ENCODE measurements at regions of chr11 and their contacts with region 1.

Region 1: DNA sequence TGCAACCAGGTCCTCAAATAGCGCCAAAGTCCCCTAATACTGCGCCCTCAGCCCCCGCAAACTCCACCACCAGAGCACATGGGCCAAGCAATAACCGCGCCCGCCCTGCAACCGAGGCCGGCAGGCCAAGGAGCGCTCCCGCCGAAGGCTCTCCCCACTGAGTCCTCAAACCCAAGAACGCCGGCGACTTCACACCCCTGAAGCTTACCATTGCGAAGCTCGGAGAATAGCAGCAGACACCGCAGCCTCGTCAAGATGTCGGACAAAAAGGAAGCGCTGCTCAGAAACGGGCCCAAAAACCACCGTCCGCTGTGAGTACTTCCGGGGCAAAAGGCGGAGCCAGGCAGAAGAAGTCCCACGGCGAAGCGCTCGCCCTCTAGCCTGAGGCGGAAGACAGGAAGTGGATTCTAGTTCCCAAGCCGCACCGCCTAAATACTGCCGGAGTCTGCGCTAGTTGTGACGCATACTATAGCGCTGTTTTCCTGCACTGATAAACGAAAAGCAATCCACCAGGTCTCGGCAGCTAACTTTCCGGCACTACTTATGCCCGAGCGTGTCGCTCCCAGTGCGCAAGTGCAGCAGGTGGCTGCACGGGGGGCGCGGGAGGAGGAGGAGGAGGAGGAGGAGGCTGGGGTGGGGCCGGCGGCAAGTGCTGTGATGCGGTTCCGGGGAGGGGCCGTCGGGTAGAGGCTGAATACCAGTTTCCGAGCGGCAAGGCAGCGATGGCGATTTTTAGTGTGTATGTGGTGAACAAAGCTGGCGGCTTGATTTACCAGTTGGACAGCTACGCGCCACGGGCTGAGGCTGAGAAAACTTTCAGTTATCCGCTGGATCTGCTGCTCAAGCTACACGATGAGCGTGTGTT is at the starts of genes RPS25 and TRAPPC4:
- DNase-seq: peak; percentile 98
- ATAC-seq: peak; percentile 91
- H3K4me3 Mint-ChIP-seq: peak within 1 kb of the TSS; percentile 94
- H3K27ac Mint-ChIP-seq: peak within 1 kb of the TSS; percentile 99
- H3K4me1 Mint-ChIP-seq: peaks cover 56% of the 10 kb centered on the region
- H3K27me3 Mint-ChIP-seq: no peaks in the 10 kb centered on the region
- total RNA-seq, gene RPS25: 945 to 1,070 TPM
- total RNA-seq, gene TRAPPC4: 73.9 to 91.5 TPM

Region 2: GRCh38 chr11:118980191-118980881 is 38.0 kb before region 1 on chr11:
- CTCF ChIA-PET with region 1: no interaction called
- DNase-seq: no peak
- ATAC-seq: no peak
- H3K4me3 Mint-ChIP-seq: no peak overlapping the region
- H3K27ac Mint-ChIP-seq: no peak overlapping the region
- H3K4me1 Mint-ChIP-seq: no peaks in the 10 kb centered on the region
- H3K27me3 Mint-ChIP-seq: peaks cover 12% of the 10 kb centered on the region

Region 3: GRCh38 chr11:118997627-118998387 is 20.5 kb before region 1 on chr11 and contains the start of gene CENATAC:
- CTCF ChIA-PET with region 1: interaction called, 33 read pairs
- DNase-seq: peak; percentile 98
- ATAC-seq: peak; percentile 97
- H3K4me3 Mint-ChIP-seq: peak within 1 kb of the TSS; percentile 97
- H3K27ac Mint-ChIP-seq: peak within 1 kb of the TSS; percentile 97
- H3K4me1 Mint-ChIP-seq: peaks cover 33% of the 10 kb centered on the region
- H3K27me3 Mint-ChIP-seq: no peaks in the 10 kb centered on the region
- total RNA-seq, gene CENATAC: 43.4 to 47.1 TPM

Region 4: DNA sequence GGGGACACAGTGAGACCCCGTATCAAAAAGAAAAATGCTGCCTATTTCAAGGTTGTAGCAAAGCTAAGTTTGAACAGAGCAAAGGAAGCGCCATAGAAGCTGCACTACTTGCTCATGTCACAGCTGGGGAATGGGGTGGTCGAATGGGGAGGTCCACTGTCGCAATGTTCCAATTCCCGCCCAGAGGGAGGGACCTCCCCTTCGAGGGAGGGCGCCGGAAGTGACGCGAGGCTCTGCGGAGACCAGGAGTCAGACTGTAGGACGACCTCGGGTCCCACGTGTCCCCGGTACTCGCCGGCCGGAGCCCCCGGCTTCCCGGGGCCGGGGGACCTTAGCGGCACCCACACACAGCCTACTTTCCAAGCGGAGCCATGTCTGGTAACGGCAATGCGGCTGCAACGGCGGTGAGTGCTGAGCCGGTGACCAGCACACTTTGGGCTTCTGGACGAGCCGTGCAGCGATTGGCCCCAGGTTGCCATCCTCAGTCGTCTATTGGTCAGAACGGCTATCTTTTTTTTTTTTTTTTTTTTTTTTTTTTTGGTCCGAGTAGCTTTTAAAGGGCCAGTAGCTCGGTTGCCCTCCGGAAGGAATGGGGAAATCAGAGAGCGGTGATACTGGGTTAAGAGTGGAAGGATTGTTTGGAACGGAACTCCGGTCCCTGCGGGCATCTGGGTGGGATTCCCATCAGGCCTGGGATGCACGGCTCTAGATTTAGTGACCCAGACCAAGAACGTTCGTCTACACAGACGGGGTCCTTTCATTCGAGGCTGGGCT is 66.5 kb after region 1 on chr11 and contains the start of gene HMBS:
- CTCF ChIA-PET with region 1: no interaction called
- DNase-seq: peak; percentile 94
- ATAC-seq: peak; percentile 90
- H3K4me3 Mint-ChIP-seq: peak within 1 kb of the TSS; percentile 93
- H3K27ac Mint-ChIP-seq: peak within 1 kb of the TSS; percentile 89
- H3K4me1 Mint-ChIP-seq: peaks cover 30% of the 10 kb centered on the region
- H3K27me3 Mint-ChIP-seq: no peaks in the 10 kb centered on the region
- total RNA-seq, gene HMBS: 26.6 to 36.7 TPM

Region 5: GRCh38 chr11:119175493-119176077 is 157.3 kb after region 1 on chr11:
- CTCF ChIA-PET with region 1: no interaction called
- DNase-seq: no peak
- ATAC-seq: no peak
- H3K4me3 Mint-ChIP-seq: no peak overlapping the region
- H3K27ac Mint-ChIP-seq: no peak overlapping the region
- H3K4me1 Mint-ChIP-seq: peaks cover 24% of the 10 kb centered on the region
- H3K27me3 Mint-ChIP-seq: no peaks in the 10 kb centered on the region

Region 6: DNA sequence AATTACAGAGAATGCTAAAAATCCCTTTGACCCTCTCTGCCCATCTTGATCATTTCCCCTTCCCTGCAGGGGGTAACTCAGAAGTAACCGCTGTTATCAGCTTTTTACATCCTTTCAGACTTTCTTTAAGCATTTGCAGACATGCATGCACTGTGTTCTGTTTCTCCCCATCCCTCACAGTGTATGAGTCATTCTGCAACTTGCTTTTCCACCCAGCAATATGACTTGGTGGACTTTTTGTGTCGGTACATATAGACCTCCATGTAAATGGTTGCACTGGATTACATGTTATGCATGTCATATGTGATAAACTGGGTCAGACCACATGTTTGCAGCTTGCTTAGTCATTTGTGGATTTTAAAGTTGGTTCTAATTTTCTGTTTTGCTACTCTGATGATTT is 798.4 kb after region 1 on chr11:
- CTCF ChIA-PET with region 1: no interaction called
- DNase-seq: no peak
- ATAC-seq: peak; percentile 39
- H3K4me3 Mint-ChIP-seq: no peak overlapping the region
- H3K27ac Mint-ChIP-seq: no peak overlapping the region
- H3K4me1 Mint-ChIP-seq: peaks cover 8% of the 10 kb centered on the region
- H3K27me3 Mint-ChIP-seq: peaks cover 16% of the 10 kb centered on the region